Naive thymus-derived CD4-positive, alpha-beta T cell (primary cell): ENCODE measurements at regions of chr9 and their contacts with region 1.

Region 1: GRCh38 chr9:124415102-124415851 is at the start of gene PSMB7:
- DNase-seq: peak; percentile 91 to 97 (median 96)
- ATAC-seq: peak; percentile 99
- H3K4me3 ChIP-seq: peak within 1 kb of the TSS; percentile 75
- H3K4me3 Mint-ChIP-seq: peak within 1 kb of the TSS; percentile 93 to 99 (median 97)
- H3K27ac ChIP-seq: peak within 1 kb of the TSS; percentile 78
- H3K27ac Mint-ChIP-seq: peak within 1 kb of the TSS; percentile 82 to 98 (median 94)
- H3K4me1 ChIP-seq: peaks cover 13 to 18% of the 10 kb centered on the region in 2 donors
- H3K4me1 Mint-ChIP-seq: peaks cover 16 to 46% (median 39%) of the 10 kb centered on the region in 7 donors
- H3K27me3 ChIP-seq: no peaks in the 10 kb centered on the region
- H3K27me3 Mint-ChIP-seq: no peaks in the 10 kb centered on the region
- total RNA-seq, gene PSMB7: 59.4 to 129 (median 63.2) TPM

Region 2: GRCh38 chr9:123929870-123930831 is 485.1 kb before region 1 on chr9 and contains the start of gene DENND1A:
- CTCF ChIA-PET with region 1: no interaction called
- POLR2A ChIA-PET with region 1: no interaction called
- intact Hi-C with region 1: loop called in 1 of 2 experiments (anchors 1 kb)
- DNase-seq: peak; percentile 69 to 89 (median 79)
- ATAC-seq: peak; percentile 96
- H3K4me3 ChIP-seq: peak within 1 kb of the TSS; percentile 58
- H3K4me3 Mint-ChIP-seq: peak within 1 kb of the TSS; percentile 84 to 96 (median 88)
- H3K27ac ChIP-seq: peak within 1 kb of the TSS; percentile 73
- H3K27ac Mint-ChIP-seq: peak within 1 kb of the TSS; percentile 76 to 95 (median 88)
- H3K4me1 ChIP-seq: peaks cover 7 to 20% of the 10 kb centered on the region in 2 donors
- H3K4me1 Mint-ChIP-seq: peaks cover 32 to 48% (median 45%) of the 10 kb centered on the region in 7 donors
- H3K27me3 ChIP-seq: no peaks in the 10 kb centered on the region
- H3K27me3 Mint-ChIP-seq: peaks cover 0 to 14% (median 0%) of the 10 kb centered on the region in 5 donors
- total RNA-seq, gene DENND1A: 14.5 to 41.1 (median 17.1) TPM

Region 3: GRCh38 chr9:124428751-124429529 is 13.7 kb after region 1 on chr9:
- CTCF ChIA-PET with region 1: no interaction called
- POLR2A ChIA-PET with region 1: no interaction called
- intact Hi-C with region 1: no loop called
- DNase-seq: no peak
- ATAC-seq: no peak
- H3K4me3 ChIP-seq: no peak overlapping the region
- H3K4me3 Mint-ChIP-seq: no peak overlapping the region
- H3K27ac ChIP-seq: no peak overlapping the region
- H3K27ac Mint-ChIP-seq: no peak overlapping the region
- H3K4me1 ChIP-seq: no peaks in the 10 kb centered on the region
- H3K4me1 Mint-ChIP-seq: peaks cover 0 to 1% (median 0%) of the 10 kb centered on the region in 7 donors
- H3K27me3 ChIP-seq: no peaks in the 10 kb centered on the region
- H3K27me3 Mint-ChIP-seq: peaks cover 0 to 13% (median 6%) of the 10 kb centered on the region in 5 donors

Region 4: DNA sequence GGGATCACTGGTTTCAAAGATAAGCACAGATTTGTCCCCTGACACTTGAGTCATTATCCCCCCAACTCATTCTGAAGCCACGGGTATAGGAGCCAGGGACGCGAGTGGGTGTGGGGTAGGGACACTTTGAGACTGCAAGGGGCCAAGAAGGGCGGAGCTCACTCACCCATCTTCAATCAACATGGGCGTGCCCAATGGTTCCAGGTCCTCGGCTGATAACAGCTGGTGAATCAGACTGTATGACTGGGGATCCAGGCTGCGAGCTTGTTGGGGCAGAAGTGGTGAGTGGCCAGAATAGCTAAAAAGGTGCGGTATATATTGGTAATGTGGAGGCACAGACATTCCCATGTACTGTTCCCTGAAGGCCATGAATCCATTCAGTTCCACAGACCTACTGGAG is 122.6 kb after region 1 on chr9:
- CTCF ChIA-PET with region 1: interaction called, 27 read pairs
- POLR2A ChIA-PET with region 1: no interaction called
- intact Hi-C with region 1: loop called in 1 of 2 experiments (anchors 1 kb)
- DNase-seq: no peak
- ATAC-seq: no peak
- H3K4me3 ChIP-seq: no peak overlapping the region
- H3K4me3 Mint-ChIP-seq: no peak overlapping the region
- H3K27ac ChIP-seq: no peak overlapping the region
- H3K27ac Mint-ChIP-seq: no peak overlapping the region
- H3K4me1 ChIP-seq: no peaks in the 10 kb centered on the region
- H3K4me1 Mint-ChIP-seq: no peaks in the 10 kb centered on the region
- H3K27me3 ChIP-seq: no peaks in the 10 kb centered on the region
- H3K27me3 Mint-ChIP-seq: peaks cover 0 to 17% (median 8%) of the 10 kb centered on the region in 5 donors

Region 5: GRCh38 chr9:124658165-124659017 is 243.1 kb after region 1 on chr9:
- CTCF ChIA-PET with region 1: no interaction called
- POLR2A ChIA-PET with region 1: no interaction called
- intact Hi-C with region 1: loop called in 1 of 2 experiments (anchors 1 kb)
- DNase-seq: peak in 7 of 9 donors; percentile 21 to 44 (median 34)
- ATAC-seq: peak; percentile 84
- H3K4me3 ChIP-seq: peak overlapping the region; percentile 71
- H3K4me3 Mint-ChIP-seq: peak overlapping the region; percentile 87 to 98 (median 94)
- H3K27ac ChIP-seq: peak overlapping the region; percentile 61
- H3K27ac Mint-ChIP-seq: peak overlapping the region in 8 of 9 donors; percentile 85 to 98 (median 89)
- H3K4me1 ChIP-seq: peaks cover 0 to 6% of the 10 kb centered on the region in 2 donors
- H3K4me1 Mint-ChIP-seq: peaks cover 23 to 61% (median 35%) of the 10 kb centered on the region in 7 donors
- H3K27me3 ChIP-seq: no peaks in the 10 kb centered on the region
- H3K27me3 Mint-ChIP-seq: peaks cover 0 to 18% (median 0%) of the 10 kb centered on the region in 5 donors

Region 6: GRCh38 chr9:124852829-124853531 is 437.7 kb after region 1 on chr9 and contains the start of gene WDR38:
- CTCF ChIA-PET with region 1: no interaction called
- POLR2A ChIA-PET with region 1: no interaction called
- intact Hi-C with region 1: loop called in 1 of 2 experiments (anchors 5 kb)
- DNase-seq: peak; percentile 55 to 86 (median 76)
- ATAC-seq: peak; percentile 95
- H3K4me3 ChIP-seq: peak within 1 kb of the TSS; percentile 50
- H3K4me3 Mint-ChIP-seq: peak within 1 kb of the TSS in 9 of 10 donors; percentile 64 to 79 (median 68)
- H3K27ac ChIP-seq: peak within 1 kb of the TSS; percentile 46
- H3K27ac Mint-ChIP-seq: peak within 1 kb of the TSS in 3 of 9 donors; percentile 9 to 23 (median 19)
- H3K4me1 ChIP-seq: peaks cover 8% of the 10 kb centered on the region in 2 donors
- H3K4me1 Mint-ChIP-seq: peaks cover 4 to 14% (median 6%) of the 10 kb centered on the region in 7 donors
- H3K27me3 ChIP-seq: no peaks in the 10 kb centered on the region
- H3K27me3 Mint-ChIP-seq: peaks cover 5 to 16% (median 9%) of the 10 kb centered on the region in 5 donors
- total RNA-seq, gene WDR38: not detected